Activated naive CD4-positive, alpha-beta T cell treated with anti-CD3 and anti-CD28 coated beads for 36 hours (primary cell): ENCODE measurements at regions of chr7 and their contacts with region 1.

Region 1: GRCh38 chr7:37181550-37181932 is 267.1 kb downstream of the ELMO1 start:
- DNase-seq: no peak
- H3K4me3 Mint-ChIP-seq: no peak overlapping the region
- H3K27ac Mint-ChIP-seq: no peak overlapping the region
- H3K4me1 Mint-ChIP-seq: peaks cover 7% of the 10 kb centered on the region
- H3K27me3 Mint-ChIP-seq: no peaks in the 10 kb centered on the region

Region 2: DNA sequence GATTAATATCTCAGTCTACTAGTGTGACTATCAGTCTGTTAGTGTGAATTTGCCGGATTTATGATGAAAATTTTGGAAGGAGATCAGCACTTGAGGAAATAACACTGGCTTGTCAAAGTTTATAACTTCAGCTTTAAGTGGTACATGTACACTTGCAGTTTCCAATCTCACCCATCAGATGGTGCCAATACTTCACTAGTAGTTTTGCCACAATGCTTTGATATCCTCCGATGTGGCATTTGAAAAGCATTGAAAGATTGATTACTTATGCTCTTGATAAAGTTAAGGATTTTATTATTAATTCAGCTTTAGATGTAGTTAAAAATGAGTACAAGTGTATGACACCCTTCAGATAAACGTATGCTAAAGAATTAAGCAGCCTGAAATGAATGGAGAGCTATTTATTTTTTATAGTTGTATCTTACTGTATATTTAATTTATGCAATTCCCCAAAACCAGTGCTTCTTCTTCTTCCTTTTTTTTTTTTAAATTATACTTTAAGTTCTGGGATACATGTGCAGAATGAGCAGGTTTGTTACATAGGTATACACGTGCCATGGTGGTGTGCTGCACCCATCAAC is 693.7 kb before region 1 on chr7:
- CTCF ChIA-PET with region 1: interaction called, 9 read pairs
- intact Hi-C with region 1: loop called (anchors 1 kb)
- DNase-seq: peak; percentile 54
- H3K4me3 Mint-ChIP-seq: no peak overlapping the region
- H3K27ac Mint-ChIP-seq: no peak overlapping the region
- H3K4me1 Mint-ChIP-seq: peaks cover 2% of the 10 kb centered on the region
- H3K27me3 Mint-ChIP-seq: no peaks in the 10 kb centered on the region

Region 3: DNA sequence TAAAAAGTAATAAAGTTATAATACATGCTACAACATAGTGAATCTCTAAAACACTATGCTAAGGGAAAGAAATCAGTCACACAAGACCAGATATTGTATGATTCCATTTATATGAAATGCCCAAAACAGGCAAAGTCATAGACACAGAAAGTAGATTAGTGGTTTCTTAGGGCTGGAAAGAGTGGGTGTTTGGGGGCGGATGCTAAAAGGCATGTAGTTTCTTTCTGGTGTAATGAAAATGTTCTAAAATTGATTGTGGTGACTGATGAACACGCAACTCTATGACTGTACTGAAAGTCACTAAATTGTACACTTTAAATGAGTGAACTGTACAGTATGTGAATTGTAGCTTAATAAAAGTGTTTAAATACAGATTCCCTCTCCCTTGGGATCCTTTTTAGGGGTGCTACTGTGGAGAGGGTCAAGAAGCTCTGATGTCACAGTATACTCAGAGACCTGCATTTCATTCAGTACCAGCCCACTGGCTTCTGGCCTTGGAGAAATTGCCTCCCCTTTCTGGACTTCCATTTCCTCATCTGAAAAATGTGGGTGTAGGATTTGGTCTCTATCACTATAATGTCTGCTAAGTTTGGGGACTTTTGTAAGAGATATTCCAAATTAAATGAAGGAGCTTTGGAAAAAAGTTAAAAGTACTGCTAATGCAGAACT is 503.6 kb before region 1 on chr7:
- CTCF ChIA-PET with region 1: interaction called, 6 read pairs
- intact Hi-C with region 1: loop called (anchors 2 kb)
- DNase-seq: peak; percentile 79
- H3K4me3 Mint-ChIP-seq: peak overlapping the region; percentile 31
- H3K27ac Mint-ChIP-seq: peak overlapping the region; percentile 57
- H3K4me1 Mint-ChIP-seq: peaks cover 38% of the 10 kb centered on the region
- H3K27me3 Mint-ChIP-seq: peaks cover 2% of the 10 kb centered on the region

Region 4: GRCh38 chr7:36986429-36987362 is 194.8 kb before region 1 on chr7:
- CTCF ChIA-PET with region 1: interaction called, 71 read pairs
- intact Hi-C with region 1: loop called (anchors 1 kb)
- DNase-seq: peak; percentile 80
- H3K4me3 Mint-ChIP-seq: no peak overlapping the region
- H3K27ac Mint-ChIP-seq: no peak overlapping the region
- H3K4me1 Mint-ChIP-seq: peaks cover 27% of the 10 kb centered on the region
- H3K27me3 Mint-ChIP-seq: no peaks in the 10 kb centered on the region

Region 5: GRCh38 chr7:37201003-37201875 is 19.7 kb after region 1 on chr7:
- CTCF ChIA-PET with region 1: interaction called, 25 read pairs
- intact Hi-C with region 1: no loop called
- DNase-seq: peak; percentile 64
- H3K4me3 Mint-ChIP-seq: no peak overlapping the region
- H3K27ac Mint-ChIP-seq: no peak overlapping the region
- H3K4me1 Mint-ChIP-seq: peaks cover 2% of the 10 kb centered on the region
- H3K27me3 Mint-ChIP-seq: no peaks in the 10 kb centered on the region

Region 6: DNA sequence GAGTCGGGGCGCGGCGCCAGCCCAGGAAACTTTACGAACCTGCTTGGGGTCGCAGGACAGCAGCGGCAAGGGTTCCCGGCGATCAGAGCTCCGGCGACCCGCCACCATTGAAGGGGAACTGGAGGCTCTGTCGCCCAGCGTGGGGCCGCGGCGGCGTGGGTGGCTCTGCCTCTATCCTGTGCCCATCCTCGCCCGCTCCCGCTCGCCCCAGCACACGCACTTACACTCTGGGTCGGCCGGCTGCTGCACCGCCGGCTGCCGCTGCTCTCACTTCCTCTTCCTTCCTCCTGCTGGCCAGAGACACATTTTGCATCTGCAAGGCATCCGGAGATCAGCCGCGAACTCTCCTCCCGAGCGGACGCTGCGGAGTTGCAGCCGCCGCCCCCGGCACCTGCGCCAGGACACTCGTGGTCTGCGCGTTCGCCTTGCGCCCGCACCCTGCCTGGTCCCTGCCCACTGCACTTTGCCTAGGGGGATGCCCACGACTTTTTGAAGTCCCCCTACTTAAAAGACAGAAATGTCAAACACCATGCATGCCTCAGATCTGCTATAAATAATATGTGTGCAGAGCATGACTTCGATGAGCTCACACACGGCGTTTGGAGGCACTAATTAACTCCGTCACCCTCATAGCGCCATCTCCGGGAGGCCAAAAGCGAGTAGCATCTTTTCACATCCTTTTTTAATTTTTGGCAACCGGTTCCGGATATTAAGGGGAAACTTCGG is 267.3 kb after region 1 on chr7 and contains the start of gene ELMO1:
- CTCF ChIA-PET with region 1: no interaction called
- intact Hi-C with region 1: no loop called
- DNase-seq: peak; percentile 81
- H3K4me3 Mint-ChIP-seq: peak within 1 kb of the TSS; percentile 94
- H3K27ac Mint-ChIP-seq: peak within 1 kb of the TSS; percentile 95
- H3K4me1 Mint-ChIP-seq: peaks cover 45% of the 10 kb centered on the region
- H3K27me3 Mint-ChIP-seq: no peaks in the 10 kb centered on the region
- total RNA-seq, gene ELMO1: 129 to 137 TPM